Motor neuron (in vitro differentiated cells): ENCODE measurements at regions of chr12 and their contacts with region 1.

Region 1: DNA sequence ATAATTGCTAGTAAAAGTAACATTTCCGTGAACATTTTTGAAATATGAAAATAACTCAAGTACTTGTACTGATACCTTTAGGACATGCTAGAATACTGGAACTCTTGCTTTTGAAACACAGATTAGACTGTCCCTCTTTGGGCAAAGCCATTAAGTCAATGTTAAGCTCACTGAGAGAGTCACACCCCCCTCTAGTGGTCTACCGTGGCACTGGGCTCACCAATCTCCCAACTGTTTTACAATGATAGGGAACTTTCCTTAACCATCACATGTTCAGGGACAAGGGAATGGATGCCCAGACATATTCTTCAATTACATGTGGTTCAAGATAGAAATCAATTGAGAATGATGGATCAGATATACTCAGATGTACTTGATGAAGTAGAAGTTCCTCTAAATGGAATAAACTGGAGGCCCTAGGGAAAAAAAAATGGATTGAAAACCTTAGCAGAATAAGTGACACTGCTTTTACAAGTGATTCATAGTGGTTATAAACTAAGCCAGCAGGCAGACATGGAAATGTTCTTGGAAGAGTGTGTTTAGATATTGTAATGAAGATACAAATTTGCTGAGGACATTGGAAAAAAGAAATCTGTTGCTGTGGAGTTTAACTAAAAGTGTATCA is 17.8 kb downstream of the NANOG start:
- ATAC-seq: peak; percentile 67 to 93 (median 86)
- H3K4me3 ChIP-seq: no peak overlapping the region
- H3K27ac ChIP-seq: no peak overlapping the region
- H3K4me1 ChIP-seq: no peaks in the 10 kb centered on the region

Region 2: GRCh38 chr12:7678738-7679137 is 128.2 kb before region 1 on chr12:
- in situ Hi-C with region 1: loop called in 4 of 9 experiments (anchors 10 to 25 kb)
- ATAC-seq: peak in 3 of 8 experiments; percentile 25 to 79 (median 52)
- H3K4me3 ChIP-seq: no peak overlapping the region
- H3K27ac ChIP-seq: no peak overlapping the region
- H3K4me1 ChIP-seq: no peaks in the 10 kb centered on the region

Region 3: GRCh38 chr12:7695237-7696197 is 111.5 kb before region 1 on chr12 and contains the start of gene GDF3:
- in situ Hi-C with region 1: loop called in 2 of 9 experiments (anchors 25 kb)
- ATAC-seq: peak; percentile 38 to 95 (median 94)
- H3K4me3 ChIP-seq: peak within 1 kb of the TSS in 2 of 5 donors; percentile 26 to 31
- H3K27ac ChIP-seq: peak within 1 kb of the TSS; percentile 65 to 73
- H3K4me1 ChIP-seq: peaks cover 0 to 16% of the 10 kb centered on the region in 2 donors
- total RNA-seq, gene GDF3: 0.21 to 49.4 (median 30.7) TPM in 5 of 8 experiments, not detected in the others